CD8-positive, alpha-beta T cell (primary cell): ENCODE measurements at regions of chr12 and their contacts with region 1.

Region 1: GRCh38 chr12:21697904-21698630 is 40.4 kb upstream of the LDHB start:
- DNase-seq: peak in 2 of 9 experiments; percentile 56 to 65
- ATAC-seq: no peak
- H3K4me3 ChIP-seq: no peak overlapping the region
- H3K4me3 Mint-ChIP-seq: no peak overlapping the region
- H3K27ac ChIP-seq: no peak overlapping the region
- H3K27ac Mint-ChIP-seq: no peak overlapping the region
- H3K4me1 ChIP-seq: no peaks in the 10 kb centered on the region
- H3K4me1 Mint-ChIP-seq: peaks cover 9% of the 10 kb centered on the region
- H3K27me3 ChIP-seq: no peaks in the 10 kb centered on the region
- H3K27me3 Mint-ChIP-seq: no peaks in the 10 kb centered on the region
- CTCF ChIP-seq: peak; percentile 85

Region 2: DNA sequence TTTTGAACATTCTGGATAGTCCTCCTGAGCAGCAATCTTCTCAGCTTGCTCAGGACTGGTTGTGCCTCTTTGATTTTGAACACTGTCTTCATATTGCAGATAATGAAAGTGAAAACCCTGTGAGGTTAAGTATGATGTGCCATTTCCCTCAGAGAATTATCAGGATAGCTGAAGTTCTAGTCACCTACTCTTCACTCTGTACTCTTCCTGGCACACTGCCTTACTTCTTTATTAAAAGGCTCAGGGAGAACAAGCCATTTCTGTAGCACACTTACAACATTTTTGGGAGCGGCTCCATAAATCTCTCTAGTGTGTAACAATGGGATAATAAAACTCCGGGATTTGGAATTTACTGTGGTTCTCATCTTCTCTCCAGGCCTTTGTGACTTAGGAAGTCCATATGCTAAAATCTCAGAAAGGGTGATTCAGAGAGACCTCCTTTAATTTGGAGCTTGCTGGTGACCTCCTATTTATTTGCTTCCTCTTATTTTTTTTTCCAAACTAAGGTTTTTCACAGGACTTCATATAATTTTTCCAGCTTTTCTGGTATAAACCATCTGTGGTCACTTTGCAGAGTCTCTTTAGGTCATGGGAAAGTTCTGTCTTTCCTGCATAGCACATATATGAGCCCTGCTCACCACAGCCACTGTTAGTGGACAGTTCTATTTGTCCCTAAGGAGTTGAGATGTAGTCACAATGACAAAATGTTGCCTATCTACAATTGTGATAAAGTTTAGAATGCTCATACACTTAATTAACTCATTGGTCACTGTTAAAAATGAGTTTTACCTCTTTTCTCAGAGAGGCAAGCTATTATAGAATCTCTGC is 13.1 kb after region 1 on chr12:
- CTCF ChIA-PET with region 1: interaction called, 13 read pairs
- POLR2A ChIA-PET with region 1: no interaction called
- intact Hi-C with region 1: no loop called
- DNase-seq: no peak
- ATAC-seq: no peak
- H3K4me3 ChIP-seq: no peak overlapping the region
- H3K4me3 Mint-ChIP-seq: no peak overlapping the region
- H3K27ac ChIP-seq: no peak overlapping the region
- H3K27ac Mint-ChIP-seq: no peak overlapping the region
- H3K4me1 ChIP-seq: no peaks in the 10 kb centered on the region
- H3K4me1 Mint-ChIP-seq: no peaks in the 10 kb centered on the region
- H3K27me3 ChIP-seq: no peaks in the 10 kb centered on the region
- H3K27me3 Mint-ChIP-seq: peaks cover 20% of the 10 kb centered on the region
- CTCF ChIP-seq: no peak

Region 3: GRCh38 chr12:21989819-21990412 is 291.8 kb after region 1 on chr12:
- CTCF ChIA-PET with region 1: interaction called, 22 read pairs
- POLR2A ChIA-PET with region 1: no interaction called
- intact Hi-C with region 1: no loop called
- DNase-seq: peak in 2 of 9 experiments; percentile 3 to 4
- ATAC-seq: no peak
- H3K4me3 ChIP-seq: no peak overlapping the region
- H3K4me3 Mint-ChIP-seq: no peak overlapping the region
- H3K27ac ChIP-seq: no peak overlapping the region
- H3K27ac Mint-ChIP-seq: no peak overlapping the region
- H3K4me1 ChIP-seq: no peaks in the 10 kb centered on the region
- H3K4me1 Mint-ChIP-seq: peaks cover 4% of the 10 kb centered on the region
- H3K27me3 ChIP-seq: no peaks in the 10 kb centered on the region
- H3K27me3 Mint-ChIP-seq: peaks cover 8% of the 10 kb centered on the region
- CTCF ChIP-seq: peak; percentile 26

Region 4: GRCh38 chr12:22018860-22019259 is 320.8 kb after region 1 on chr12:
- CTCF ChIA-PET with region 1: interaction called, 19 read pairs
- POLR2A ChIA-PET with region 1: no interaction called
- intact Hi-C with region 1: loop called (anchors 1 to 5 kb)
- DNase-seq: peak in 2 of 9 experiments; percentile 6 to 26
- ATAC-seq: no peak
- H3K4me3 ChIP-seq: no peak overlapping the region
- H3K4me3 Mint-ChIP-seq: no peak overlapping the region
- H3K27ac ChIP-seq: no peak overlapping the region
- H3K27ac Mint-ChIP-seq: no peak overlapping the region
- H3K4me1 ChIP-seq: no peaks in the 10 kb centered on the region
- H3K4me1 Mint-ChIP-seq: no peaks in the 10 kb centered on the region
- H3K27me3 ChIP-seq: no peaks in the 10 kb centered on the region
- H3K27me3 Mint-ChIP-seq: peaks cover 3% of the 10 kb centered on the region
- CTCF ChIP-seq: peak; percentile 55

Region 5: GRCh38 chr12:22173177-22173576 is 475.1 kb after region 1 on chr12:
- CTCF ChIA-PET with region 1: no interaction called
- POLR2A ChIA-PET with region 1: no interaction called
- intact Hi-C with region 1: loop called in 1 of 2 experiments (anchors 5 kb)
- DNase-seq: peak in 1 of 9 experiments; percentile 20
- ATAC-seq: no peak
- H3K4me3 ChIP-seq: no peak overlapping the region
- H3K4me3 Mint-ChIP-seq: no peak overlapping the region
- H3K27ac ChIP-seq: no peak overlapping the region
- H3K27ac Mint-ChIP-seq: no peak overlapping the region
- H3K4me1 ChIP-seq: no peaks in the 10 kb centered on the region
- H3K4me1 Mint-ChIP-seq: peaks cover 3% of the 10 kb centered on the region
- H3K27me3 ChIP-seq: no peaks in the 10 kb centered on the region
- H3K27me3 Mint-ChIP-seq: no peaks in the 10 kb centered on the region
- CTCF ChIP-seq: no peak

Region 6: GRCh38 chr12:22443379-22444316 is 745.6 kb after region 1 on chr12:
- CTCF ChIA-PET with region 1: interaction called, 5 read pairs
- POLR2A ChIA-PET with region 1: no interaction called
- intact Hi-C with region 1: loop called (anchors 1 kb)
- DNase-seq: peak; percentile 20 to 86 (median 53)
- ATAC-seq: peak; percentile 99
- H3K4me3 ChIP-seq: no peak overlapping the region
- H3K4me3 Mint-ChIP-seq: no peak overlapping the region
- H3K27ac ChIP-seq: no peak overlapping the region
- H3K27ac Mint-ChIP-seq: no peak overlapping the region
- H3K4me1 ChIP-seq: peaks cover 4% of the 10 kb centered on the region
- H3K4me1 Mint-ChIP-seq: peaks cover 4% of the 10 kb centered on the region
- H3K27me3 ChIP-seq: no peaks in the 10 kb centered on the region
- H3K27me3 Mint-ChIP-seq: no peaks in the 10 kb centered on the region
- CTCF ChIP-seq: peak; percentile 77

Region 7: DNA sequence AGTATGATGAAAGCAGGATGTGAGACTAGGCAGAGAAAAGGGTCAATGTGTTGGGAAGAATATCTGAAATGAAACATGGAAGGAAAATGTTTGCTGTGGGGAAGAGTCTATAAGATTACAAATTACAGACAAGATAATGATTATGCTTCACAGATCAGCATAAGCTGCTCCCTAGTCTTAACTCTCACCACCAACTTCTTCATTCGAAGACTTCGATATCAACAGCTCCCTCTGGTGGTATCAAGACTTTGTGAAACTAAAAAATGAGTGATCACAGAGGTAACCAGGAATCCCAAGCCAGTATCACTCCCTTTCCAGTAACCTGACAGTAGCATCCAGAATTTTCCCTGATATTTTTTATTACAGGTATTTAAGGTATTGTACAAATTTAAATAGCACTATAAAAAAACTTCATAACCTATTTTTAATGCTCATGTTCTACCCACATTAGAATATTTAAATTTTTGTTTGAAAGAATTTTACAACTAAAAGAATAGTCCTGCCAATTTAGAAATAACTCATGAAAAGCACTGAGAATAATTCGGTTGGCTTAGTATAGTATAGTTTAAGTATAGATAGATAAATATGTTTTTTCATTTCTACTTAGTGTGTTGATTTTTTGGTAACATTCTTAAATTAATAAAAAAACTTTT is 761.9 kb after region 1 on chr12:
- CTCF ChIA-PET with region 1: interaction called, 14 read pairs
- POLR2A ChIA-PET with region 1: no interaction called
- intact Hi-C with region 1: loop called (anchors 2 kb)
- DNase-seq: peak in 2 of 9 experiments; percentile 49 to 60
- ATAC-seq: no peak
- H3K4me3 ChIP-seq: no peak overlapping the region
- H3K4me3 Mint-ChIP-seq: no peak overlapping the region
- H3K27ac ChIP-seq: no peak overlapping the region
- H3K27ac Mint-ChIP-seq: peak overlapping the region; percentile 20
- H3K4me1 ChIP-seq: no peaks in the 10 kb centered on the region
- H3K4me1 Mint-ChIP-seq: no peaks in the 10 kb centered on the region
- H3K27me3 ChIP-seq: no peaks in the 10 kb centered on the region
- H3K27me3 Mint-ChIP-seq: no peaks in the 10 kb centered on the region
- CTCF ChIP-seq: peak; percentile 71